Activated T-helper 2 cell treated with anti-CD3 and anti-CD28 coated beads, Interferon-gamma antibody, Interleukin-2, Interleukin-4, amounts not matched to agents 10 μg/mL and 5 μg/mL and 100 μg/mL, durations not matched to agents 14 hours and 24 hours and 36 hours (primary cell): ENCODE measurements at regions of chr2 and their contacts with region 1.

Region 1: DNA sequence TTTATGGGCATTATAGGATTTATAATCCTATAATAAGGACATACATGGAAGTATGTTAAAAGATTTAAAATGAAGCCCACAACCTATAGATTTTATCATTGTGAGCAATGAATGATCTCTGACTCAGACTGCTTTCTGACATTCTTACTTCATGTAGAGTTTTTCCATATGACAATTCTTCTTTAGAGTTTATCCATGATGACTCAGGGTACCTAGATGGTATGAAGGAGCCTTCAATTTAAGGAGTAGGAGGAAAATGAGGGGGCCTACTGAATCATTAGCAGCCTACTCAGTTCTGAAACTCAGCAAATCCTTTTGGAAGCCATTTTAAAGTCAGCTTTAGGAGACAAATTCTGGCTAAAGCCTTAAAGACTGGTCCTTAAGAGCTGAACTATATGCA is 10.4 kb downstream of the PELI1 start:
- DNase-seq: no peak
- H3K4me3 Mint-ChIP-seq: peak overlapping the region; percentile 26
- H3K27ac Mint-ChIP-seq: peak overlapping the region; percentile 68
- H3K4me1 Mint-ChIP-seq: peaks cover 69% of the 10 kb centered on the region
- H3K27me3 Mint-ChIP-seq: no peaks in the 10 kb centered on the region

Region 2: GRCh38 chr2:64101141-64101591 is 32.7 kb before region 1 on chr2:
- intact Hi-C with region 1: loop called (anchors 1 kb)
- DNase-seq: no peak
- H3K4me3 Mint-ChIP-seq: peak overlapping the region; percentile 27
- H3K27ac Mint-ChIP-seq: peak overlapping the region; percentile 89
- H3K4me1 Mint-ChIP-seq: peaks cover 44% of the 10 kb centered on the region
- H3K27me3 Mint-ChIP-seq: no peaks in the 10 kb centered on the region

Region 3: DNA sequence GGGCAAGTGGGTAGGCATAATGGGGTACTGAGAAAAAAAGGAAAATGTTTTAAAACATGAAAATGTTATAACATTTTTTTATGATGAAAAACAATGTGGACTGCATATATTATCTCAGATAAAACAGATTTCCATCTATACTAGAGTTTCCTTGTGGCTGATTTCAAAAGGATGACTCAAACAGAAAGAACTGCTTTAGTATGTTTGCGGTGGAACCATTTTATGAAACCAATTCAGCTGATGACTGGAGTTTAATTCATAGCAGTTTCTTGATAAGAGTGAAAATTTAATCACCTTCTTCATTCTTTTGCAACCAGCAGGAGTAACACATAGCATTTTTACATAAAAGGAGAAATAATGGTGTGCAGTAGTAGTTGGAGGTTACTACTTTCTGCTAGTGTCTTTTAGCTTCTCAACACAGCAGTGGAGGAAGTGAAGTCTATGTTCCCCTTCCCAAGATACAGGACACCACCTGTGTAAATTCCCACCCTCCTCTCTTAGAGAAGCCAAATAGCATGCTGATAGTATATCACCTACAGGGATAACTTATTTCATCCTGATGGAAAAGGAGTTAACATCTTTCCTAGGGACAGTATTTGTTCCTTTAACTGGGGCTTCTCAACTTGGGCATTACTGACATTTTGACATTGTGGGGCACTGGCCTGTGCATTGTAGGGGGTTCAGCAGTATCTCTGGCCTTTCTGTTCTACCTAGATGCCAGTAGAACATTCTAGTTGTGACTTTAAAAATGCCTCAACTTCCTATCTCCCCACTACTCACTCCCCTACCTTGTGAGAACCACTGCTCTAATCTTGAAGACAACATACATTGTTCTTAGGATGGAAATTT is 19.5 kb before region 1 on chr2:
- intact Hi-C with region 1: loop called (anchors 1 kb)
- DNase-seq: no peak
- H3K4me3 Mint-ChIP-seq: peak overlapping the region; percentile 6
- H3K27ac Mint-ChIP-seq: peak overlapping the region; percentile 74
- H3K4me1 Mint-ChIP-seq: peaks cover 55% of the 10 kb centered on the region
- H3K27me3 Mint-ChIP-seq: peaks cover 2% of the 10 kb centered on the region

Region 4: GRCh38 chr2:64165706-64166105 is 31.9 kb after region 1 on chr2:
- intact Hi-C with region 1: loop called (anchors 1 kb)
- DNase-seq: no peak
- H3K4me3 Mint-ChIP-seq: no peak overlapping the region
- H3K27ac Mint-ChIP-seq: no peak overlapping the region
- H3K4me1 Mint-ChIP-seq: peaks cover 4% of the 10 kb centered on the region
- H3K27me3 Mint-ChIP-seq: no peaks in the 10 kb centered on the region

Region 5: GRCh38 chr2:64203858-64204632 is 70.2 kb after region 1 on chr2:
- intact Hi-C with region 1: loop called (anchors 2 kb)
- DNase-seq: no peak
- H3K4me3 Mint-ChIP-seq: peak overlapping the region; percentile 42
- H3K27ac Mint-ChIP-seq: peak overlapping the region; percentile 78
- H3K4me1 Mint-ChIP-seq: peaks cover 50% of the 10 kb centered on the region
- H3K27me3 Mint-ChIP-seq: no peaks in the 10 kb centered on the region